Ascending aorta (tissue), 2 donors: ENCODE measurements at regions of chr1 and their contacts with region 1.

Region 1: GRCh38 chr1:170881268-170882265 is 53.8 kb upstream of the MROH9 start:
- DNase-seq: no peak
- H3K4me3 ChIP-seq: peak overlapping the region in 1 of 2 donors; percentile 45
- H3K27ac ChIP-seq: no peak overlapping the region
- H3K4me1 ChIP-seq: peaks cover 0 to 9% of the 10 kb centered on the region in 2 donors
- H3K27me3 ChIP-seq: no peaks in the 10 kb centered on the region
- CTCF ChIP-seq: peak; percentile 38 to 72 (median 64)

Region 2: DNA sequence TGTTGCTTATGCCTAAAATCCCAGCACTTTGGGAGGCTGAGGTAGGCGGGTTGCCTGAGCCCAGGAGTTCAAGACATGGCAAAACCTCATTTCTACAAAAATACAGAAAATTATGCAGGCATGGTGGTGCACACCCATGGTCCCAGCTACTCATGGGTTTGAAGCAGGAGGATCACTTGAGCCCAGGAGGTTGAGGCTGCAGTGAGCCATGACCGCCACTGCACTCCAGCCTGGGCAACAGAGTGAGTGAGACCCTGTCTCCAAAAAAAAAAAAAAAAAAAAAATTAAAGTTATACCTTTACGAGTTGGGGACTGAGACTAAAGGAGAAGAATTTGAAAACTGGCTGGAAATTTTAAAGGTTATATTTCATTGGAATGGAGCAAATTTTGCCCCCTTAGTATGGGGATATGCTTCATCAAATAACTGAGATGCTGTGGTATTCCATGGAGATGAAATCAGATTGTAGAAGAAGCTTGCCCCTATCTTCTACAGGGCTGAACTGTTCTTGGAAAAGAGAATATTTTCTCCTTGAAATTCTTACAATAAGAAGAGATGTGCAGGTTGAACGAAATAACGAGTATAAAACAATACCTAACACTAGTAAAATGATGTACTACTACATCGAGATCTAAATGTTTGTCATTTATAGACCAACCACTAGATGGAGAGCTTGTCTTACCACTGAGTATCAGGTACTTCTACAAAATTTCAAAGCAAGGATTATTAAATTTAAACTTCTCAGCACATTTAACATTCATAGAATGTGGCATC is 952.9 kb before region 1 on chr1:
- intact Hi-C with region 1: loop called (anchors 5 kb)
- DNase-seq: no peak
- H3K4me3 ChIP-seq: no peak overlapping the region
- H3K27ac ChIP-seq: no peak overlapping the region
- H3K4me1 ChIP-seq: peaks cover 0 to 5% of the 10 kb centered on the region in 2 donors
- H3K27me3 ChIP-seq: no peaks in the 10 kb centered on the region
- CTCF ChIP-seq: peak; percentile 48 to 69 (median 65)

Region 3: DNA sequence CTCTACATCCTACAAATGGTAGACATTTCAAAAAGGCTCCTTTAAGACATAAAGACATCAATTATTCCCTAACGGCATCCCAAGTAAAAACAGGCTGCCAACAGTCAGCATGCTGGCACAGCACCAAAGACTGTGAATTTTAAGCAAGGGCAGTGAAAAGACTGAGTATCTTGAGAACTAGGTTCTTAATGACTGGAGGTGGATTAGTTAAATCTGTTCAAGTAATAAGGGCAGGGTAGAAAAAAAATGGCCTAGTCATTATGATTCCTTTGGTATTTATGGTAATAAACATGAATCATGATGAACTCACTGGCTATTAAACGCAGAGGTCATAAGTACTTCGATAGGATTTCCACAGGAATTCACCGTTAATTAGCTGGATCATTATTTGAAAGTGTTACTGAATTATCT is 882.2 kb before region 1 on chr1:
- intact Hi-C with region 1: loop called (anchors 10 kb)
- DNase-seq: no peak
- H3K4me3 ChIP-seq: no peak overlapping the region
- H3K27ac ChIP-seq: peak overlapping the region in 1 of 2 donors; percentile 10
- H3K4me1 ChIP-seq: no peaks in the 10 kb centered on the region
- H3K27me3 ChIP-seq: no peaks in the 10 kb centered on the region
- CTCF ChIP-seq: no peak

Region 4: DNA sequence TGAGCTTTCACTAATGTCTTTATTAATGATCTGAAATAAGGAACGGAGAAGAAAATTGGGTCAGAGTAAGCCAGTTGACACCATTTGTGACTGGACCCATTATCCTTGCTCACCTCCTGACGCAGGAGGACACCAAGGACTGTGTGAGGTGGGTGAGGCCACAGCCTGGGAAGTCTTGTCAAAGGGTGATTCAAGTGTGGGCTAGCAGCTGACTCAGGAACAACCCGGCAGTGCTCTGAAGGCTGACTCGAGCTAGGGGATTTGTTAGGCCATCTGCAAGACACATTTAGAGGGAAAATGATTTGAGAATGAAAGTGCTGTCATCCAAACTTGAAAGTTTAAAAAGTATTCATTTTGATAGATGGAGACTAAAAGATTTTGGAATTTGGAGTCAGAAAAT is 196.4 kb before region 1 on chr1:
- intact Hi-C with region 1: loop called (anchors 10 kb)
- DNase-seq: no peak
- H3K4me3 ChIP-seq: no peak overlapping the region
- H3K27ac ChIP-seq: no peak overlapping the region
- H3K4me1 ChIP-seq: peaks cover 0 to 14% of the 10 kb centered on the region in 2 donors
- H3K27me3 ChIP-seq: no peaks in the 10 kb centered on the region
- CTCF ChIP-seq: no peak

Region 5: DNA sequence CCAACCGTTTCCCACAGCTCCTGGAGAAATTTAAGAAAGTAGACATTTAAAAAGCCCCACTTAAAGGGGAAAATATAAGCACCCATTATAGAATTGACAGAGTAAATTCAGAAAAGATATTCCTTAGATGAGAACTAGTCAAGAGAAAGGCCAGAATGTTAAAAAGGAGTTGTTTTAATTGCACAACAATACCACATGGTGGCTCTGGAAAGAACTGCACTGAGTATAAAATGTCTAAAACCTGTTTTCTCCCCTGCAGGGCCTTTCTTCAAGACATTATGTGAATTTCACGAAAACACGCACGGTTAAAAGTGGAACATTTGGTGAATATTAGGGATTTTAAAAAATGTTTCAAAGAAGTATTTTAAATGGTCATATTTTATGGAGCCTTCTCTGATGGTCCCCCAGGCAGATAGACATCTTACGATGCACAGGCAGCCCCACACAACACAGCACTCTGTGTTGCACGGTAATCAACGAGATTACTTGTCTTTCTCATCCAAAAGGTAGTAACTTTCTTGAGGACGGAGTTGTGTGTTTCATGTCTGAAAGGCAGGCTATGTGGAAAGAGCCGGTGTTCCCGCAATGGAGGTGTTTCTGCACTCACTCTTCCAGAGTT is 115.7 kb before region 1 on chr1:
- intact Hi-C with region 1: loop called (anchors 5 kb)
- DNase-seq: no peak
- H3K4me3 ChIP-seq: no peak overlapping the region
- H3K27ac ChIP-seq: no peak overlapping the region
- H3K4me1 ChIP-seq: no peaks in the 10 kb centered on the region
- H3K27me3 ChIP-seq: no peaks in the 10 kb centered on the region
- CTCF ChIP-seq: peak; percentile 59 to 72 (median 65)

Region 6: GRCh38 chr1:170929835-170930554 is 48.4 kb after region 1 on chr1:
- intact Hi-C with region 1: loop called (anchors 5 kb)
- DNase-seq: no peak
- H3K4me3 ChIP-seq: peak overlapping the region in 1 of 2 donors; percentile 48
- H3K27ac ChIP-seq: peak overlapping the region; percentile 74 to 81
- H3K4me1 ChIP-seq: no peaks in the 10 kb centered on the region
- H3K27me3 ChIP-seq: no peaks in the 10 kb centered on the region
- CTCF ChIP-seq: peak; percentile 51 to 83 (median 69)